CD14-positive monocyte (primary cell): ENCODE measurements at regions of chr12 and their contacts with region 1.

Region 1: DNA sequence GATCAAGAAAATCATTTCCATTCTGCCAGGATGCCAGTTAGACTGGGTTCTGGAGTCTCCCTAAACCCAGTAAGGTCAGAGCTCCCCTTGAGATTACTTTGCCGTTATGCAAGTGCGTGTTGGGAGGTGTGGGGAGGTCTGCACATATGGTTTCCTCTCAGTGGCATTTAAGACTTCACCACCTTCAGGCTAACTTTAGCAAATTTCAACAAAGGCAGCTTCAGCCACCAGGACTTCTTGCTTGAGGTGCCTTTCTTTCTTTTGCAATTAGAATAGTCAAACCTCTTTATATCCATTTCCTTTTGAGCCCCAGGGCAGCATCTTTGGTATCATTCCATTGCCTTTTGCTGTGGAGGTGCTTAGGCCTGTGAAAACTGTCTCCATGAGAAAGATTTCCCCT is 117.2 kb upstream of the CCND2 start:
- DNase-seq: no peak
- H3K4me3 ChIP-seq: no peak overlapping the region
- H3K4me3 Mint-ChIP-seq: no peak overlapping the region
- H3K27ac ChIP-seq: no peak overlapping the region
- H3K27ac Mint-ChIP-seq: no peak overlapping the region
- H3K4me1 ChIP-seq: peaks cover 15 to 16% of the 10 kb centered on the region in 2 donors
- H3K4me1 Mint-ChIP-seq: peaks cover 20% of the 10 kb centered on the region
- H3K27me3 ChIP-seq: no peaks in the 10 kb centered on the region
- H3K27me3 Mint-ChIP-seq: peaks cover 0 to 2% (median 0%) of the 10 kb centered on the region in 3 donors
- CTCF ChIP-seq: no peak

Region 2: GRCh38 chr12:4112734-4113325 is 43.5 kb before region 1 on chr12:
- intact Hi-C with region 1: loop called in 1 of 2 experiments (anchors 5 kb)
- DNase-seq: no peak
- H3K4me3 ChIP-seq: no peak overlapping the region
- H3K4me3 Mint-ChIP-seq: no peak overlapping the region
- H3K27ac ChIP-seq: no peak overlapping the region
- H3K27ac Mint-ChIP-seq: no peak overlapping the region
- H3K4me1 ChIP-seq: peaks cover 33 to 34% of the 10 kb centered on the region in 2 donors
- H3K4me1 Mint-ChIP-seq: peaks cover 51% of the 10 kb centered on the region
- H3K27me3 ChIP-seq: peaks cover 0 to 5% of the 10 kb centered on the region in 2 donors
- H3K27me3 Mint-ChIP-seq: peaks cover 11 to 27% (median 19%) of the 10 kb centered on the region in 3 donors
- CTCF ChIP-seq: no peak